Dendritic cell treated with granulocyte-macrophage colony-stimulating factor and Interleukin-4, amounts not matched to agents 40 ng/mL and 50 ng/mL, for 4 days (primary cell): ENCODE measurements at regions of chr6 and their contacts with region 1.

Region 1: GRCh38 chr6:41318654-41319565 is 16.5 kb upstream of the NCR2 start:
- H3K4me3 Mint-ChIP-seq: peak overlapping the region; percentile 61
- H3K27ac Mint-ChIP-seq: peak overlapping the region; percentile 48
- H3K4me1 Mint-ChIP-seq: peaks cover 13% of the 10 kb centered on the region
- H3K27me3 Mint-ChIP-seq: peaks cover 12% of the 10 kb centered on the region

Region 2: DNA sequence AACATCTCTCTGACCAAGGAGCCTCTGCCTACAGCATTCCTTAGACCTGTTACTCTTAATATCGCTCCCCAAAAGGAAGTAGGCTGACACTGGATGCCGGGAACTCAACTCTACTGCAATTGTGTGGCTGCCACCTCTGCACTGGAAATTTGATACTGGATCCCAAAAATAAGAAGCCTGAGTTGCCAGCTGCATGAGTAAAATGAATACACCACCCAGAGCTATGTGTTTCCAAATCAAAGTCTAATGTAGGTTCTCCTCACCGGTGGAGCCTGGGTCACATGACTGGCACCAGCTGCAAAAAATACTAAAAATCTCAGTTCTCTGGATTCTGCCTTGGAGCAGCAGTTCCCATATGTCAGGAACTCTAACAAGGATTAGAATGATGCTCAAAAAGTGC is 316.7 kb before region 1 on chr6:
- intact Hi-C with region 1: loop called (anchors 2 kb)
- H3K4me3 Mint-ChIP-seq: no peak overlapping the region
- H3K27ac Mint-ChIP-seq: no peak overlapping the region
- H3K4me1 Mint-ChIP-seq: peaks cover 12% of the 10 kb centered on the region
- H3K27me3 Mint-ChIP-seq: peaks cover 52% of the 10 kb centered on the region

Region 3: DNA sequence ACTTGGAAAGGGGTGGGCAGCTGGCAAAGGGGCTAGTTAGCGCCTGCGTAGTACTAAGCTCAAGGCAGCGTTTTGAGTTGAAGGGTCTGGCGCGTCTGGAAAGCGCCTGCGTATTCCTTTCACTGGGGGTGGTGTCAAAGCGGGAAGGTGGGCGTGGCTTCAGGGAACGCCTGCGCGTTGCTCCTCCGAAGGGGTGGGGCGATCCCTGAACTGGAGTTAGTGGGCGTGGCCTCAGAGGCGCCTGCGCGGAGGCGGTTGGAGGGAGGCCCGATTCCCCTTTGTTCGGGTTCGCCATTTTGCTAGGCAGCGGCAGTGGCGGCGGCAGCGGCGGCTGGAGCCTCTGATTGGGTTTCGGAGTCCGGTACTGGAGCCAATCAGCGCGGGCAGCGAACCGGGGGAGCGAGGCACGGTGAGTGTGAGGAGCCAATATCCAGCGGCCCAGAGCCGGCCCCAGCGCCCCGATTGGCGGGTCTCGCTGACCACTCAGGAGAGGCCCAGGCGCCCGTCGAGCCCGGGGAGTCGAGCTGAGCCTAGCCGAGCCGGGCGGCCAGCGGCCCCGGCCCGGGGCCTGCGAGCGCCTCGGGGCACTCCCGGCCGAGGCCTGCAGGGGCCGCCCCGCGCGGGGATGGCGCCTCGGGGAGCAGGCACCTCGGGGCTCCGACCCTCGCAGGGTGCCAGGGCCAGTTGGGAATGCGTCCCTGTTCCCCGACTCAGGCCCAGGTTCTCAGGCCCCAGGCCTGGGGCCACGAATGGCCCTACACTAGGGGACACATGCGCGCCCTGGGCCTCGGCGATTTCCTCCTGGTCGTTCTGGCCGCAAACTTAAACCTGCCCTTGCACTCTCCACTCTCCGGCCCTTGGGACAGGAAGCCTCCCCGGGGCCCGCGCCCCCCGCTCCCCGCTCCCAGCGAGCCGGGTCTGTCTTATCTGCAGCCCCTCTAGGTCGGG is 246.0 kb before region 1 on chr6 and contains the start of gene NFYA:
- intact Hi-C with region 1: loop called (anchors 5 kb)
- H3K4me3 Mint-ChIP-seq: peak within 1 kb of the TSS; percentile 96
- H3K27ac Mint-ChIP-seq: peak within 1 kb of the TSS; percentile 99
- H3K4me1 Mint-ChIP-seq: peaks cover 37% of the 10 kb centered on the region
- H3K27me3 Mint-ChIP-seq: no peaks in the 10 kb centered on the region

Region 4: DNA sequence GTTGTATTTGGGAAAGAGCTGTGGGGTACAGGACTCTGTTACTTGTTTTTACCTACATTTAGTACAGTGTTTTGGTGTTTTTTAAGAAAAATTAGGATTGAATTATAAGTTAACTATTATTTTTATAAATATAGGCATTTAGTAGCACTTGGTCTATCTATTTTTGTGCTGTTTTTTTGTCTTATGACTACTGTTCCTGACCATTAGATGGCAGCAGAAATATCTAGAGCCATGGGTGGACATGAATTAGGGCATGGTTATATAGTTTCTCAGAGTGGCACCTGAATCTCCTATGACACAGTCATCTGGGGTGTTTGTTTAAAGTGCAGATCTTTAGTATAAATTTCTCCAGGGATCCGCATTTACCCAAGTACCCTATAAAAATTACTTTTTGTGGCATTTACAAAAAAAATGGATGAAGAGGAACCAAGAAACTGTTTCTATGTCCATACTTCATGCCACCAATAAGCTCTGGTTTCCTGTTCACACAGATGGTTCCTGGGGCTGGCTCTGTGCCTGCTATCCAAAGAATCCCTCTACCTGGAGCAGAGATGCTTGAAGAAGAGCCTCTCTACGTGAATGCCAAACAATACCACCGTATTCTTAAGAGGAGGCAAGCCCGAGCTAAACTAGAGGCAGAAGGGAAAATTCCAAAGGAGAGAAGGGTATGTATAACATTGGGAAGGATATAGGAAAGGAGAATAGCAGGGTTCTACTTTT is 226.3 kb before region 1 on chr6:
- intact Hi-C with region 1: loop called (anchors 2 kb)
- H3K4me3 Mint-ChIP-seq: no peak overlapping the region
- H3K27ac Mint-ChIP-seq: no peak overlapping the region
- H3K4me1 Mint-ChIP-seq: no peaks in the 10 kb centered on the region
- H3K27me3 Mint-ChIP-seq: no peaks in the 10 kb centered on the region

Region 5: DNA sequence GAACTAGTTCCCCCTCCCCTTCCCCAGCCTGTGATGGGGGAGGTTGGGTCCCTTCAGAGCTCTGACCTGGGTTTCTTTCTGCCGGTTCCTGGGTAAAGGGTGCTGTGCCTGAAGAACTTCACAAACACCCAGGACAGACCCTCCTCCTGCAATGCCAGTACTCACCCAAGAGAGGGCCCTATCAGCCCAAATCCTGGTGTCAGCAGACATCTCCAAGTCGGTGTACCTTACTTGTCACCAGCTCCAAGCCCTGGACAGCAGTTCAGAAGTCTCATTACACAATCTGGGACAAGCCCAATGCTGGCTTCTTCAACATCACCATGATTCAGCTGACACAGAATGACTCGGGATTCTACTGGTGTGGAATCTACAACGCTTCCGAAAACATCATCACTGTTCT is 90.3 kb before region 1 on chr6:
- intact Hi-C with region 1: loop called (anchors 10 kb)
- H3K4me3 Mint-ChIP-seq: no peak overlapping the region
- H3K27ac Mint-ChIP-seq: no peak overlapping the region
- H3K4me1 Mint-ChIP-seq: peaks cover 29% of the 10 kb centered on the region
- H3K27me3 Mint-ChIP-seq: peaks cover 5% of the 10 kb centered on the region

Region 6: DNA sequence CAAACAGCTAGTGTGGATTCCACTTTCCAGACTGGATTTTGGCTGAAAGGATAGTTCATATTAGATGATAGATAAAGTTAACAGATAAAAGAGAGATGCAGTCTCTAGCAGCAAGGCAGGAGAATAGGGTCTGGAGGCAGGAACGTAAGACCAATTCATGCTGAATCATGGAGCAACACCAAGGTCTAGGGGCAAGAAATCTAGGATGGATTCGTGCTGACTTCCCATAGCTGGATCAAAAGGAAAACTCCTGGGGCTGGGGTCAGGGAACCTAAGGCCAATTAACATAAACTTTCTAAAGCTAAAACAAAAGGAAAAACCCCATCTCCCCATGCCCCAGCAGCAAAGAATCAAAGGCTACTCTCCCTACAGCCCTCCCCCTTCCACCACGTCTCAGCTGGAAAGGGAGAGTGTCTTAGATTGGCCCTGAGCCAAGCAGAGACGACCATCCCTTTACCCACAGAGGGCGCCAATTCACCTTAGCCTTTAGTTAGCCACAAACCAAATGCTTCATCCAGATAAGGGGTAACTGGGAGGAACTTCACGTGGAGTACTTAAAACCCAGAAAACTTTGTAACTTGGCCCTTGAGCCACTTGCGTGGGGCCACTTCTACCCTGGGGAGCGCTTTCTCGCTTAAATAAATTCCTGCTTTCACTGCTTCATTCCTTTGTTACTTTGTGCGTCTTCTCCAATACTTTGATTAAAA is 40.1 kb before region 1 on chr6:
- intact Hi-C with region 1: loop called (anchors 5 kb)
- H3K4me3 Mint-ChIP-seq: no peak overlapping the region
- H3K27ac Mint-ChIP-seq: peak overlapping the region; percentile 52
- H3K4me1 Mint-ChIP-seq: peaks cover 88% of the 10 kb centered on the region
- H3K27me3 Mint-ChIP-seq: peaks cover 2% of the 10 kb centered on the region